ENCODE measurements at regions of chr6 and their contacts with region 1.

Region 1: DNA sequence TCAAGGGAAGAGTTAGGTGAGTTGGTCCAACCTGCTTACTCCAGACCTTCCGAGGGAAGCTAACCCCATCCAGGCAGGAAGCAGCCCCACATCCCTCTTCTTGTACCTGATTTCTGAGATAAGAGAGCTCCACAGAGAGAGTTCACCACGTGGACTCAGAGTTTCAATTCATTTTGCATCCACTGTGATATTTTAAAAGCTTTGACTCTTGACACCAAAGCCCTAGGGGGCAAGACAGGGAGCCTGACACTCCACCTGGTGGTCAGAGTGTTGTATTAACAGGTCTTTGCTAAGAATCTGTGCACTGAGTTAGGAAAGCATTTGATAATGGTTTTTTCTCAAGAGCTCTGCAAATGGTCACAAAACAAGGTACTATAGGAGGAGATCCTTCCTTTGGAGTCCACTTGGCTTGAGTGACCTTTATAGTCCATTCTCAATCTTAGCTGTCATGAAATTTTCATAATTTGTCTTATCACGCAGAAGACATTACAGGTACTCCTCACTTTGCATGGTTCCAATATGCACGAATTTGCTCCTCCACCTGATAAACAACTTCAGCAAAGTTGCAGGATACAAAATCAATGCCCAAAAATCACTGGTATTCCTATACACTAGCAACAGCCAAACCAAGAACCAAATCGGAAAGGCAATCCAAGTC is 56.2 kb upstream of the RIPOR2 start:
- DNase-seq: peak; percentile 48 to 90 (median 75)
- ATAC-seq: peak; percentile 92
- H3K4me3 ChIP-seq: peak overlapping the region; percentile 5 to 15
- H3K4me3 Mint-ChIP-seq: peak overlapping the region; percentile 68
- H3K27ac ChIP-seq: peak overlapping the region; percentile 14 to 55
- H3K27ac Mint-ChIP-seq: peak overlapping the region; percentile 93
- H3K4me1 ChIP-seq: peaks cover 40% of the 10 kb centered on the region
- H3K4me1 Mint-ChIP-seq: peaks cover 74% of the 10 kb centered on the region
- H3K27me3 ChIP-seq: no peaks in the 10 kb centered on the region
- H3K27me3 Mint-ChIP-seq: no peaks in the 10 kb centered on the region
- CTCF ChIP-seq: peak; percentile 83

Region 2: DNA sequence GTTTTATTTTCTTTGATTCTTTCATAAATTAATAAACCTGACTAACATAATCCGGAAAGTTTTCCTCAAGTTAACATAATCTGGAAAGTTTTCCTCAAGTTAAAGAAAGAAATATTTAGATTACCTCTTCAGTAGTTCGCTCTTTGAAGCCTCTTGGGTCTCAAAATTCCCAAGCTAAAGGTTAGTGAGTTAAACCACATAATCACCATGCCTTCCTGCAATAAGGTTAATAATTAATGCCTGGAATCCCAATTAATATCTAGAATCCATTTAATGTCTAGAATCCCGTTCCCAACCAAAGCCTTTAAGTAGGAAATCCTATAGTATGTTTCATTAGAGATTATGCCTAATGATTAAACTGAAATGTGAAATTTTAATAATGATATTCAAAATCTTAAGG is 647.0 kb before region 1 on chr6:
- CTCF ChIA-PET with region 1: no interaction called
- POLR2A ChIA-PET with region 1: no interaction called
- intact Hi-C with region 1: no loop called
- DNase-seq: no peak
- ATAC-seq: no peak
- H3K4me3 ChIP-seq: no peak overlapping the region
- H3K4me3 Mint-ChIP-seq: no peak overlapping the region
- H3K27ac ChIP-seq: no peak overlapping the region
- H3K27ac Mint-ChIP-seq: no peak overlapping the region
- H3K4me1 ChIP-seq: no peaks in the 10 kb centered on the region
- H3K4me1 Mint-ChIP-seq: no peaks in the 10 kb centered on the region
- H3K27me3 ChIP-seq: no peaks in the 10 kb centered on the region
- H3K27me3 Mint-ChIP-seq: peaks cover 41% of the 10 kb centered on the region
- CTCF ChIP-seq: no peak

Region 3: GRCh38 chr6:24680582-24680981 is 311.4 kb before region 1 on chr6:
- CTCF ChIA-PET with region 1: no interaction called
- POLR2A ChIA-PET with region 1: no interaction called
- intact Hi-C with region 1: no loop called
- DNase-seq: no peak
- ATAC-seq: no peak
- H3K4me3 ChIP-seq: no peak overlapping the region
- H3K4me3 Mint-ChIP-seq: no peak overlapping the region
- H3K27ac ChIP-seq: no peak overlapping the region
- H3K27ac Mint-ChIP-seq: no peak overlapping the region
- H3K4me1 ChIP-seq: no peaks in the 10 kb centered on the region
- H3K4me1 Mint-ChIP-seq: peaks cover 3% of the 10 kb centered on the region
- H3K27me3 ChIP-seq: no peaks in the 10 kb centered on the region
- H3K27me3 Mint-ChIP-seq: no peaks in the 10 kb centered on the region
- CTCF ChIP-seq: no peak

Region 4: DNA sequence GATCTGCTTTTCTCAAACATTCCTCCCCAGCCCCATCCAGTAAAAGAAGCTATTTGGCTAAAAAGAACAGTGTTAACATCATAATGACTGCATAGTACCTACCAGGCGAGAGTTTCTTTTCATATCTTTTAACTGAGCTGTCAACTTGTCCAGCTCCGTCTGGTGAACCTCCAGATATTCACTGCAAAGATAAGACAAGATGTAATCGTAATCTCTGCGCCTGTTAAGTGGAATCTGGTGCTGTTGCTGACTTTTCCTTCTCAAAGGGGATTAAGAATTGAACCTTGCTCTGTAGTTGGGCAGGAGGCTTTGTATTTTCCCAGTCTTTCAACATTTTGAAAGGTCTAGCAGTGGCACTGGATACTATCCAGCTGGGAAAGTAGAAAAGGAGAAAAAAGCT is 119.2 kb before region 1 on chr6:
- CTCF ChIA-PET with region 1: interaction called, 14 read pairs
- POLR2A ChIA-PET with region 1: interaction called, 5 read pairs
- intact Hi-C with region 1: no loop called
- DNase-seq: no peak
- ATAC-seq: no peak
- H3K4me3 ChIP-seq: no peak overlapping the region
- H3K4me3 Mint-ChIP-seq: no peak overlapping the region
- H3K27ac ChIP-seq: peak overlapping the region in 1 of 2 experiments; percentile 41
- H3K27ac Mint-ChIP-seq: peak overlapping the region; percentile 86
- H3K4me1 ChIP-seq: peaks cover 45% of the 10 kb centered on the region
- H3K4me1 Mint-ChIP-seq: peaks cover 65% of the 10 kb centered on the region
- H3K27me3 ChIP-seq: no peaks in the 10 kb centered on the region
- H3K27me3 Mint-ChIP-seq: no peaks in the 10 kb centered on the region
- CTCF ChIP-seq: no peak

Region 5: DNA sequence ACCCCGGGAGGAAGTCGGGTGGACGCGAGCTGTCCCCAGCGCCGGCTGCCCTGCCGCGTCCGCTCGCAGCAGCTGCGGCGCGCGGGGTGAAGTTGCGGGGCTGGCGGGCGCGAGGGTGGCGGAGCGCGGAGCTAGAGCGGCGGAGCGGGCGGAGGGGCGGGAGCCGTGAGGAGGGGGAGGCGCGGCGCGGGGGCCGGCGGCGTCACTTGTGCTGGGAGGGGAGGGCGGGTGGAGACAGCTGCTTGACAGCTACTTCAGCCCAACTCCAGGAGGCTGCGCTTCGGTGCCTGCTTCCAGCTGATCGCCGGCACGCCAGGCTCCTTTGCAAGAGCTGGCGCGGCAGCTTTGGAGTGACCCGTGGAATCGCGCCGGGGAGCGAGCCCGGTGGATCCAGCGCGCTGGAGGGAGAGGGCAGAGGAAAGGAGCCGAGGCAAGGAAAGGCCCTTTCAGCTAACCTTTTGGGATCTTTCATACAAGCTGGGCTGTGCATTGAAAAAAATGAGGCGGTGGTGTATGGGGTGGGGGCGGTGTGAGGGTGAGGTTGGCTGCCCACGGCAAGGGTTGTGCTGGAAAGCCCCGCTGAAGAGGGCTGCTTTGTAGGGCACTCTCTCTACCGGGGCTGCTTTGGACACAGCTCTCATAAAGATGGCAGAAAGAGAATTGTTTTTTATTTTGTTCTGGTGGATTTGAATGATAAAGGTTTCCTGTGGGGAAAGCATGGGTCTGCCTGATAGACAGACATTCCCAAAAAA is 80.8 kb before region 1 on chr6:
- CTCF ChIA-PET with region 1: interaction called, 176 read pairs
- POLR2A ChIA-PET with region 1: interaction called, 18 read pairs
- intact Hi-C with region 1: loop called (anchors 2 kb)
- DNase-seq: peak in 7 of 9 experiments; percentile 29 to 77 (median 68)
- ATAC-seq: peak; percentile 38
- H3K4me3 ChIP-seq: peak overlapping the region; percentile 57 to 62
- H3K4me3 Mint-ChIP-seq: peak overlapping the region; percentile 94
- H3K27ac ChIP-seq: peak overlapping the region; percentile 62 to 69
- H3K27ac Mint-ChIP-seq: peak overlapping the region; percentile 98
- H3K4me1 ChIP-seq: peaks cover 92% of the 10 kb centered on the region
- H3K4me1 Mint-ChIP-seq: peaks cover 93% of the 10 kb centered on the region
- H3K27me3 ChIP-seq: no peaks in the 10 kb centered on the region
- H3K27me3 Mint-ChIP-seq: no peaks in the 10 kb centered on the region
- CTCF ChIP-seq: no peak

Region 6: DNA sequence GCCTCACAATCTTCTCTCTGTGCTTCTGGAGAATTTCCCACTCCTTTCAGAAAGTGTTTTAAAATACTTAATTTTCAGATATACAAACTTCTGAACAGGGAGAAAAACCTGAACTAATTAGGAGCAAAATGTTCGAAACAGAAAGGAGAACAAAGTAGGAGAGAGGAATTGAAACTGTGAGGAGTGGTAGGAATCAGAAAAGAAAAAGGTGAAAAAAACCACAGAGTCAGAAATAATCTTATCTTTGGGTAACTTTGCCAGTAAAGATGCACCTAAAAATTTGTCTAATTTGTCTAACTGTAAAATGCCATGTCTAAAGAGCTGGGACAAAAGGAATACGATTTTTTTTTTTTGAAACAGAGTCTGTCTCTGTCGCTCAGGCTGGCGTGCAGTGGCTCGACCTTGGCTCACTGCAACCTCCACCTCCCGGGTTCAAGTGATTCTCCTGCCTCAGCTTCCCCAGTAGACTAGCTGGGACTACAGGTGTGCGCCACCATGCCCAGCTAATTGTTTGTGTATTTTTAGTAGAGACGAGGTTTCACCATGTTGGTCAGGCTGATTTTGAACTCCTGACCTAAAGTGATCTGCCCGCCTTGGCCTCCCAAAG is 51.5 kb before region 1 on chr6:
- CTCF ChIA-PET with region 1: interaction called, 320 read pairs
- POLR2A ChIA-PET with region 1: interaction called, 136 read pairs
- intact Hi-C with region 1: loop called (anchors 1 kb)
- DNase-seq: no peak
- ATAC-seq: no peak
- H3K4me3 ChIP-seq: no peak overlapping the region
- H3K4me3 Mint-ChIP-seq: peak overlapping the region; percentile 37
- H3K27ac ChIP-seq: peak overlapping the region; percentile 3 to 68
- H3K27ac Mint-ChIP-seq: peak overlapping the region; percentile 86
- H3K4me1 ChIP-seq: peaks cover 53% of the 10 kb centered on the region
- H3K4me1 Mint-ChIP-seq: peaks cover 64% of the 10 kb centered on the region
- H3K27me3 ChIP-seq: no peaks in the 10 kb centered on the region
- H3K27me3 Mint-ChIP-seq: no peaks in the 10 kb centered on the region
- CTCF ChIP-seq: no peak

Region 7: GRCh38 chr6:24974182-24975171 is 17.5 kb before region 1 on chr6:
- CTCF ChIA-PET with region 1: interaction called, 76 read pairs
- POLR2A ChIA-PET with region 1: interaction called, 7 read pairs
- intact Hi-C with region 1: loop called in 1 of 2 experiments (anchors 2 kb)
- DNase-seq: peak in 4 of 9 experiments; percentile 33 to 70 (median 42)
- ATAC-seq: peak; percentile 84
- H3K4me3 ChIP-seq: no peak overlapping the region
- H3K4me3 Mint-ChIP-seq: peak overlapping the region; percentile 13
- H3K27ac ChIP-seq: peak overlapping the region in 1 of 2 experiments; percentile 73
- H3K27ac Mint-ChIP-seq: peak overlapping the region; percentile 89
- H3K4me1 ChIP-seq: peaks cover 39% of the 10 kb centered on the region
- H3K4me1 Mint-ChIP-seq: peaks cover 65% of the 10 kb centered on the region
- H3K27me3 ChIP-seq: no peaks in the 10 kb centered on the region
- H3K27me3 Mint-ChIP-seq: no peaks in the 10 kb centered on the region
- CTCF ChIP-seq: no peak

Region 8: GRCh38 chr6:25692472-25692871 is 700.5 kb after region 1 on chr6:
- CTCF ChIA-PET with region 1: no interaction called
- POLR2A ChIA-PET with region 1: no interaction called
- intact Hi-C with region 1: no loop called
- DNase-seq: no peak
- ATAC-seq: no peak
- H3K4me3 ChIP-seq: no peak overlapping the region
- H3K4me3 Mint-ChIP-seq: no peak overlapping the region
- H3K27ac ChIP-seq: no peak overlapping the region
- H3K27ac Mint-ChIP-seq: no peak overlapping the region
- H3K4me1 ChIP-seq: no peaks in the 10 kb centered on the region
- H3K4me1 Mint-ChIP-seq: no peaks in the 10 kb centered on the region
- H3K27me3 ChIP-seq: no peaks in the 10 kb centered on the region
- H3K27me3 Mint-ChIP-seq: peaks cover 30% of the 10 kb centered on the region
- CTCF ChIP-seq: no peak